IMR-90 (cell line): ENCODE measurements at regions of chr6 and their contacts with region 1.

Region 1: DNA sequence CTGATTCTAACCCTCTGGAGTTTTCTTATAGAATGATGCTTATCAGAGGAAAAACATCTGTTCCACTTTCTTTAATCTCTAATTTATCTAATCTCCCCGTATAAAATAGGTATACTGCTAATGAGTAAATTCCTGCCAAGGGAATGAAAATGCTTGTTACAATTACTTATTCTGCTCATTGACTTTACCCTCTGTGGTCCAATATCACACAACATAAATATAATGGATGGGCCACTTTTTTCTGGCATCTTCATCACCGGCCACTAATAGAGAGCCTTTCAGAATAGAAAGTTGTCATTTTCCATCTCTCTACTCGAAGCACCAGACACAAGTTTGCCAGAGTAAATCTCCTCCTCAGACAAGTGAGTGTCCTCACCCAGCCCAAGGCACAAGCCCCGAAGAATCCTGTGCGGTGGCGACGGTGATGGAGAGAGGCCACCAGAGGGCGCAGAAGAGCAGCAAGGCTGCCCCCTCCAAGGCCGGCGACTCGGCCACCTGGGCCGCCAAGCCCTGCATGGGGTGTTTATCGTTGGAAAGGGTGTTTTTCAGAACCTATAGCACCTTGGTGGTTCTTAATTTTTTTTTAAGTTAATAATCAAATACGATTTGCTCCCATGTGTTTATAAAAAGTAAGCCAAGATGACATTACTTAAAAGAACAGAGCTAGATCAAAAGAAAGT is 212.9 kb upstream of the ARID1B start:
- DNase-seq: peak; percentile 53
- ATAC-seq: peak; percentile 99
- H3K4me3 ChIP-seq: no peak overlapping the region
- H3K27ac ChIP-seq: no peak overlapping the region
- H3K4me1 ChIP-seq: no peaks in the 10 kb centered on the region
- H3K27me3 ChIP-seq: peaks cover 5% of the 10 kb centered on the region
- CTCF ChIP-seq: peak; percentile 88
- POLR2A ChIP-seq: no peak
- RAD21 ChIP-seq: peak; percentile 89

Region 2: GRCh38 chr6:156686995-156687788 is 122.9 kb after region 1 on chr6:
- CTCF ChIA-PET with region 1: no interaction called
- POLR2A ChIA-PET with region 1: no interaction called
- dilution Hi-C with region 1: no loop called
- in situ Hi-C with region 1: no loop called
- intact Hi-C with region 1: loop called (anchors 1 kb)
- DNase-seq: peak; percentile 87
- ATAC-seq: peak; percentile 94
- H3K4me3 ChIP-seq: peak overlapping the region; percentile 74
- H3K27ac ChIP-seq: peak overlapping the region; percentile 99
- H3K4me1 ChIP-seq: no peaks in the 10 kb centered on the region
- H3K27me3 ChIP-seq: no peaks in the 10 kb centered on the region
- CTCF ChIP-seq: no peak
- POLR2A ChIP-seq: peak; percentile 77
- RAD21 ChIP-seq: no peak

Region 3: GRCh38 chr6:156752666-156753301 is 188.5 kb after region 1 on chr6:
- CTCF ChIA-PET with region 1: no interaction called
- POLR2A ChIA-PET with region 1: no interaction called
- dilution Hi-C with region 1: no loop called
- in situ Hi-C with region 1: loop called (anchors 25 kb)
- intact Hi-C with region 1: no loop called
- DNase-seq: no peak
- ATAC-seq: no peak
- H3K4me3 ChIP-seq: no peak overlapping the region
- H3K27ac ChIP-seq: no peak overlapping the region
- H3K4me1 ChIP-seq: no peaks in the 10 kb centered on the region
- H3K27me3 ChIP-seq: peaks cover 2% of the 10 kb centered on the region; the same call in 1 of the 2 replicates
- CTCF ChIP-seq: 0 out of 2 replicates have a peak, but pooled peaks have one; percentile 4
- POLR2A ChIP-seq: no peak
- RAD21 ChIP-seq: no peak

Region 4: DNA sequence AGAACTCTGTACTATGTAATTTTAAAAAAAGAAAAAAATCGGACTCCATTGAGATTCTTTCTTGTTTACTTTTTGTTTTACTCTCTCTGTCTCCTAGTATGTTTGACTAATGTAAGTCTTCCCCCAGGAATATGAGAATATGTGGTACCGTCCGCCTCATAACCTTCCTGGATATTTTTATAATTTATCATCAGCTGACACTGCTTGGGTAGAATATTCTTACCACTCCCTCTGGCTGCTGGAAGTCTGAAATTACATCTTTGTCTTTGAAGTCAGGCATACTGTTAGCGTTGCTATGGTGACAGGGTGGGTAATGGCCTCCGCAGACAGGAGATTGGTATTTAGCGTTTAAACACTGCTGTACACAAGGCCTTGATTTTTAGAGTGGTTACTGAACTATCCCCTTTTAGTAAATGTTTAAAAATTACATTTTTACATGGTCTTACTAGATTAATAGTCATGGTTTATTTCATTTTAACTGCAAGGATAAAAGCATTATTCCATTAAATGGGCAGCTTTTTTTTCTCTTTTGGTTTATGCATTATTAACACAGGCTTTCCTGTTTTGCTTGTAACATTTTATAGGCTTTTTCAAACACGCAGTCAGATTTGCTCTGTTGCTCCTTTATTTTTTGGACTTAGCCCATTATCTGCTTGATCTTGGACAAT is 389.3 kb after region 1 on chr6:
- CTCF ChIA-PET with region 1: no interaction called
- POLR2A ChIA-PET with region 1: no interaction called
- dilution Hi-C with region 1: no loop called
- in situ Hi-C with region 1: no loop called
- intact Hi-C with region 1: loop called (anchors 10 kb)
- DNase-seq: peak; percentile 99
- ATAC-seq: peak; percentile 86
- H3K4me3 ChIP-seq: no peak overlapping the region
- H3K27ac ChIP-seq: no peak overlapping the region
- H3K4me1 ChIP-seq: peaks cover 18% of the 10 kb centered on the region
- H3K27me3 ChIP-seq: no peaks in the 10 kb centered on the region
- CTCF ChIP-seq: peak; percentile 51
- POLR2A ChIP-seq: peak; percentile 44; the same call in 1 of the 2 replicates
- RAD21 ChIP-seq: peak; percentile 22; the same call in 1 of the 2 replicates

Region 5: GRCh38 chr6:157021344-157021992 is 457.2 kb after region 1 on chr6:
- CTCF ChIA-PET with region 1: no interaction called
- POLR2A ChIA-PET with region 1: no interaction called
- dilution Hi-C with region 1: no loop called
- in situ Hi-C with region 1: loop called (anchors 10 kb)
- intact Hi-C with region 1: loop called (anchors 5 kb)
- DNase-seq: peak; percentile 81
- ATAC-seq: peak; percentile 78
- H3K4me3 ChIP-seq: peak overlapping the region; percentile 64
- H3K27ac ChIP-seq: peak overlapping the region; percentile 98
- H3K4me1 ChIP-seq: peaks cover 12% of the 10 kb centered on the region
- H3K27me3 ChIP-seq: no peaks in the 10 kb centered on the region
- CTCF ChIP-seq: peak; percentile 52
- POLR2A ChIP-seq: peak; percentile 95
- RAD21 ChIP-seq: peak; percentile 25; the same call in 1 of the 2 replicates

Region 6: DNA sequence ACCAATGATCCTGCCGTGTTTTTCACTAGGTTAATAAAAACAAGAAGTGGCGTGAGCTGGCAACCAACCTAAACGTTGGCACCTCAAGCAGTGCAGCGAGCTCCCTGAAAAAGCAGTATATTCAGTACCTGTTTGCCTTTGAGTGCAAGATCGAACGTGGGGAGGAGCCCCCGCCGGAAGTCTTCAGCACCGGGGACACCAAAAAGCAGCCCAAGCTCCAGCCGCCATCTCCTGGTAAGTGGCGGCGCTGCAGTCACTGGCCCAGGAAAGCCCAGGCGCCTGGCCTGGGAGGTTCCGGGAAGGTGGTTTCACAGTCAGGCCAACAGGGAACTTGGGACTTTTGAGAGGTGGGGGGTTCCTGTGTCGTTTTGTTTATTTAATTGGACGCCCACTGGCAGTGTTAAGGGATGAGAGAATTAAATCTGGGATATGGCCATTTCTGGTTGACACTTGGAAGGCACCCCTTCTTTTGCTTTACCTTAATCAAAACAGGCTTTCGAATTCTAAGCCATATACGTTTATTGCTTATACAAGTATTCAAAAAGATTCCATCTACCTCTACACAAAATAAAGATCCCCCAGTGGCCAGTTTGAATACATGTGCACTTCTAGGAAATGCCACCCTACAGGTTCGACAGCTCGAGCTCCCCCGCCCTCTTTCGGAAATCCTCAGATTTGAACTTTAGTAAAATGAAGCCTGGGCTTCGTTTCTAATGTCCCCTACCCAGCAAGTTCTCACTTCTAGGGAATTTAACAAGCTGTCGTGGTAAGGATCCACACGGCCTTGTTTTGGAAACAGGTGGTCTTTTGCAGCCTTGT is 620.1 kb after region 1 on chr6:
- CTCF ChIA-PET with region 1: no interaction called
- POLR2A ChIA-PET with region 1: no interaction called
- dilution Hi-C with region 1: no loop called
- in situ Hi-C with region 1: loop called (anchors 10 kb)
- intact Hi-C with region 1: loop called (anchors 1 kb)
- DNase-seq: peak; percentile 56
- ATAC-seq: peak; percentile 91
- H3K4me3 ChIP-seq: no peak overlapping the region
- H3K27ac ChIP-seq: no peak overlapping the region
- H3K4me1 ChIP-seq: peaks cover 3% of the 10 kb centered on the region; the same call in 1 of the 2 replicates
- H3K27me3 ChIP-seq: no peaks in the 10 kb centered on the region
- CTCF ChIP-seq: peak; percentile 89
- POLR2A ChIP-seq: no peak
- RAD21 ChIP-seq: peak; percentile 96